Activated T-helper 2 cell treated with anti-CD3 and anti-CD28 coated beads, Interferon-gamma antibody, Interleukin-2, Interleukin-4, amounts not matched to agents 10 μg/mL and 5 μg/mL and 100 μg/mL, durations not matched to agents 14 hours and 24 hours and 36 hours (primary cell): ENCODE measurements at regions of chr3 and their contacts with region 1.

Region 1: DNA sequence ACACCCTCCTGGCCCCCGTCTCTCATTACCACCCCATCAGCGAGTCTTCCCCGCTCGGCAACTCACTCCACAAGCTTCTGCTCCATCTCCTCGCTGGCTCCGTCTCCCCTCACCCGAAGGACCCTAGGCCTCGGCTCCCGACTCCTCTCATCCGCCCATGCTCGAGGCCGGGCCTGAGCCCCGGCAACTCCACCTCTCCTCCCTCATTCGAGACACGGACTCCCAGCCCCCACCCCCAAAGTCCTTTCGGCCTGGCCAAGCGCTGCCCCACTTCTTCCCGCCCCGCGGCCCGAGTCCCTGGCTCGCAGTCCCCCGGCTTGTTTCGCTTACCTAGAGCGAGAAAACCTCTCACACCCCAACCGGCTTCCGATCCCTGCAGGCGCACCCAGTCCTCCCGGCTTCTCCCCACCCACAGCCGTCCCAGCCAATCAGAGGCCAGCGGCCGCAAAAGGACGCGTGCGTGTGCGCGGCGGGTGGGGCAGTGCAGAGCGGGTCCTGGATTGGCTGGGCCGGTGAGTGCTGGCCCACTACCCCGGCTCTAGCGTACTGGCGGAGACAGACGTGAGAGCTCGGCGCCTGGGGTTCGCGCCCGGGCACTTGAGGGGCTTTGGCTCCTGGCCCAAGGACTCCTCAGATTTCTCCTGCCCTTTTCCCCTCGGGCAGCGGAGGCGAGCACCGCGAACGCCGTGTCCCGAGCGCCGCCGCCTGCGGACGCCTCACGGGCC is at the start of gene HIGD1A:
- DNase-seq: peak; percentile 92
- H3K4me3 Mint-ChIP-seq: peak within 1 kb of the TSS; percentile 96
- H3K27ac Mint-ChIP-seq: peak within 1 kb of the TSS; percentile 87
- H3K4me1 Mint-ChIP-seq: peaks cover 36% of the 10 kb centered on the region
- H3K27me3 Mint-ChIP-seq: peaks cover 31% of the 10 kb centered on the region
- total RNA-seq, gene HIGD1A: 85.9 and 88.5 TPM in 2 replicates

Region 2: DNA sequence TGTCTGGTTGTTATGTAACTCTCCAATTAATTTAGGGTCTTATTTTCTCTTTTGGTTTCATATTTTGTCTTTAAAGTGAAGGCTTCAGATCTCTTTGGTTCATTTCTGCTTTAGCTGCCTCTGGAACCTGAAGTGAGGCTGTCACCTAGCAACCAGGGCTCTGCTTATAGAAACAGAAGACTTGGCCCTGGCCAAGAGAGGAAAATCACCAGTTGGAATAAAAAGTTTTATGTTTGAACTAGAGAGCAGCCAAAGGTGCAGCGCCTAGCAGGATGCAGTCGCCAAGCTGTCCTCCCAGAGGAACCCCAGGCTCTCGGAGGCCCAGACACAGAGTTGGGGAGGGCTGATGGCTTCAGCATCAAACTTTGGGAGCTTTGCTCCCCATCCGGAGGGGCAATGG is 435.0 kb before region 1 on chr3:
- intact Hi-C with region 1: no loop called
- DNase-seq: no peak
- H3K4me3 Mint-ChIP-seq: no peak overlapping the region
- H3K27ac Mint-ChIP-seq: no peak overlapping the region
- H3K4me1 Mint-ChIP-seq: no peaks in the 10 kb centered on the region
- H3K27me3 Mint-ChIP-seq: no peaks in the 10 kb centered on the region

Region 3: GRCh38 chr3:42732829-42733459 is 71.3 kb before region 1 on chr3:
- intact Hi-C with region 1: no loop called
- DNase-seq: no peak
- H3K4me3 Mint-ChIP-seq: no peak overlapping the region
- H3K27ac Mint-ChIP-seq: no peak overlapping the region
- H3K4me1 Mint-ChIP-seq: no peaks in the 10 kb centered on the region
- H3K27me3 Mint-ChIP-seq: peaks cover 3% of the 10 kb centered on the region

Region 4: GRCh38 chr3:42772670-42773408 is 31.4 kb before region 1 on chr3 and contains the start of gene CCDC13:
- intact Hi-C with region 1: loop called (anchors 1 kb)
- DNase-seq: peak; percentile 85
- H3K4me3 Mint-ChIP-seq: peak within 1 kb of the TSS; percentile 86
- H3K27ac Mint-ChIP-seq: peak within 1 kb of the TSS; percentile 74
- H3K4me1 Mint-ChIP-seq: peaks cover 9% of the 10 kb centered on the region
- H3K27me3 Mint-ChIP-seq: peaks cover 9% of the 10 kb centered on the region
- total RNA-seq, gene CCDC13: 0.44 TPM in 1 of 2 replicates, not detected in the other